Posterior cingulate gyrus (tissue), 11 donors: ENCODE measurements at regions of chr2 and their contacts with region 1.

Region 1: GRCh38 chr2:101387151-101387807 is at the start of gene CREG2:
- DNase-seq: peak; percentile 57 to 98 (median 78)

Region 2: GRCh38 chr2:101272045-101272784 is 115.1 kb before region 1 on chr2:
- intact Hi-C with region 1: loop called (anchors 10 kb)
- DNase-seq: no peak

Region 3: DNA sequence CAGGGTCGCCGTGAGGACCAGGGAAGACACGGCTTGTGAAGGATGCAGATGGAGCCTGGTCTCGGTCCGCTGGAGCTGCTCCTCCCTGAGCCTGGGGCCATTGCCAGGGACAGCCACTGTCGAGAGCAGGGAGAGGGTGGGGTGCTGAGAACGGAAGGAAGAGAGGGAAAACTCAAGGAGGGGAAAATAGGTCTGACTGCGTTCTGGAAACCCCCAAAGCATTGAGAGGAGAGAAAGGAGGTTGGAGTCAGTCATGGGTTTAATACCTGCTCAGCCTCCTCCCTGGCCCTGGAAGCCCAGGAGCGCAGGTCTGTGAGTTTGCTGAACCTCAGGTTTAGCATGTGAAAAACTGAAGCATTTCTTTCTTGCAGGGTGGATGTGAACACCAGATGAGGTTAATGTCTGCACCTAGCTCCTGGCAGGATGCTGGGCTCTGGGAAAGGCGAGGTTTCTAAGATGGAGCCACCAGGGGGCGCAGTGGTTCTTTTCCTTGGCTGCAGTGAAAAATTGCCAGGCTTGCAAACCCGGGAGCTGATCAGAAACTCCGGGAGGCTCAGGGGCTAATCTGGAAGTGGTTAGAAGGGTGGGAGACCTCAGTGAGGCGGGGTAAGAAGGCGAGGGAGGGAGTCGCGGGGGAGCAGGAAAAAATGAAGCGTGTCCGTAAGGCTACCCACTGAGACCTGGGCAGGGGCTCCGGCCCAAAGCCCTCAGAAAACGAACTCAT is 45.2 kb before region 1 on chr2:
- intact Hi-C with region 1: loop called (anchors 1 kb)
- DNase-seq: peak; percentile 61 to 96 (median 84)

Region 4: GRCh38 chr2:101450965-101451364 is 63.7 kb after region 1 on chr2:
- intact Hi-C with region 1: no loop called
- DNase-seq: no peak

Region 5: DNA sequence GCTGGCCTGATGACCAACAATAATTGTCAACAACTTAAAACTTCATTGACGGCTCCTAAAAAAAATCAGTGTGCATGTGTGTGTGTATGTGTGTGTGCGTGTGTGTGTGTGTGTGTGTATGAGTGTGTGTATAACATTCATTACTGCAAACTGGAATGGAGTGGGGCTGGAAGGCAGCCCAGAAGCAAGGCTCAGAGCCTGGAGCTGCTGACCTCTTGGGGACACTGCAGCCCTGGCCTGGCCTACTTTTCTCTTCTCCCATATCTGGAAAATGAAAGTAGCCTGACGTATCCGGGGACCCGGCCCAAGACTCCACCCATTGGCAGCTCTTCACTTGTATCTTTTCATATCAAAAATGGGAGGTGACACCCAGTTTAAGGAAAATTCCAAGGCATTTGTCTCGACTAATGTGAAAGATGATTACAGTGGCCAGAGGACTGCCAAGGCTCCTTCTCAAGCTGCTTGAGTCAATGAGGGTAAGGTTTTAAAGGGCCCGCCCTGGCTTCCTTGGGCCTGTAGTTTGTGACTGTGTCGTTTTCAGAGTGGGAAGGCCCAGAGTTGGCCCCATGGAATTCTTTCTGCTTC is 682.9 kb after region 1 on chr2:
- intact Hi-C with region 1: no loop called
- DNase-seq: no peak